Activated CD4-positive, alpha-beta memory T cell treated with anti-CD3 and anti-CD28 coated beads for 36 hours (primary cell): ENCODE measurements at regions of chr3 and their contacts with region 1.

Region 1: GRCh38 chr3:58167431-58168351 is 43.1 kb downstream of the DNASE1L3 start:
- DNase-seq: peak; percentile 76
- H3K4me3 Mint-ChIP-seq: no peak overlapping the region
- H3K27ac Mint-ChIP-seq: no peak overlapping the region
- H3K4me1 Mint-ChIP-seq: no peaks in the 10 kb centered on the region
- H3K27me3 Mint-ChIP-seq: no peaks in the 10 kb centered on the region

Region 2: DNA sequence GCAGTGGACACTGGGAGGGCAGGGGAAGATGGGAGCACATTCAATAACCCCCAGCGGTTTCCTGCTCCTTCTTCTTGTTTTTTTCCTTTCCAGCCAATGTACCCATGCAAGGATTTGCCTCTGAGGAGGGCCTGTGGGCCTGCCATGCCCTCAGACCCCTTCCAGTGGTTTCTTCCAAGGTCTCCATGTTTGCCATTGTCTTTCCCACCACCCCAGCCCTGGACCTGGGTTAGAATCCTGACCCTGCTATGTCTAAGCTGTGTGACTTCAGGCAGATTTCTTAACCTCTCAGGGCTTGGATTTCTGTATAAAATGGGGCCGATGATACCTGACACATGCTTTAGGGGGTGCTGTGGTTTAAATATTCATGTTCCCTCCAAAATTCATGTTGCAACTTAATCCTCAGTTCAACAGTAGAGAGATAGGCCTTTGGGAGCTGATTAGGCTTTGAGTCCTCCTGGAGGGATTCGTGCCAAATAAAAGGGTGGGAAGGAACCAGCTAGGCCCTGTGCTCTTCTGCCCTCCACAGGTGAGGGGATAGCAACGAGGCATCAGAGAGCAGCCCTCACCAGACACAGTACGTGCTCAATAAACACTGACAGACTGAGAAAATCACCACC is 205.8 kb before region 1 on chr3:
- CTCF ChIA-PET with region 1: interaction called, 11 read pairs
- POLR2A ChIA-PET with region 1: no interaction called
- intact Hi-C with region 1: no loop called
- DNase-seq: no peak
- H3K4me3 Mint-ChIP-seq: no peak overlapping the region
- H3K27ac Mint-ChIP-seq: no peak overlapping the region
- H3K4me1 Mint-ChIP-seq: peaks cover 3% of the 10 kb centered on the region
- H3K27me3 Mint-ChIP-seq: no peaks in the 10 kb centered on the region

Region 3: GRCh38 chr3:58177747-58178527 is 10.2 kb after region 1 on chr3:
- CTCF ChIA-PET with region 1: interaction called, 33 read pairs
- POLR2A ChIA-PET with region 1: no interaction called
- intact Hi-C with region 1: no loop called
- DNase-seq: peak; percentile 92
- H3K4me3 Mint-ChIP-seq: peak overlapping the region; percentile 39
- H3K27ac Mint-ChIP-seq: no peak overlapping the region
- H3K4me1 Mint-ChIP-seq: peaks cover 11% of the 10 kb centered on the region
- H3K27me3 Mint-ChIP-seq: no peaks in the 10 kb centered on the region